ENCODE measurements at regions of chr1 and their contacts with region 1.

Region 1: DNA sequence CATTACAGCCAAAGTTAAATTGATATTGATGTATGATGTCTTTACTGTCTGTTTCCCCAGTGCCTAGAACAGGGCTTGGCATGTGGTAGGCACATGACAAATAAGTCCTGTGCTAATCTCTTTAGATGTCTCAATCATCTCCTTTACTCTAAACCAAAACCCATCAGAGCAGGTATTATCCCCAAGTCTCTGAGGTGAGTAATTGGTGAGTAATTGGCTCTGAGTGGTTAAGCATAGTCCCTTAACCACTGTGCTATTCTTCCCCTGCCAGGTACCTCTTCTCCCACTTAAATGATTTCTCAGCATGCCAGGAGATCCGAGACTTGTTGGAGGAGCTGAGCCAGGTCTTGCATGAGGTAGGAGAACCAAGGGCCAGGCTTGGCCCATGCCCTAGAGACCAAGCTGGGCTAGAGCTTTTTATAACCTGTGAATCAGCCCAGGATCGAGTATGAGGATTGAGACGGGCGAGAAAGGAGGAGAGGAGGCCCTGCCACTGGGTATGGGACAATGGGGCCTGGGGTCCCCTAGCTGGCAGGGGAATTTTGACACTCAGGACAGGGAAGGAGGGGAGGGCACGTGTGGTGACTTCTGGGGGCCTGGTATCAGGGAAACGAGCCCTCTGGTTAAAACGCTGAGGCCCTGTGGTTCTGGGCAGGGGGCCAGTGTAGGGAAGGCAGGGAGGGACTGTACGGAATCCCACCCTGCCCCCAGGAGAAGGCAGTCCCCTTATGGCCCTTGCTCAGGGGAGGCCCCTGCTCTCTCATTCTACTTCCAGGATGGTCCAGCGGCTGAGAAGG is 4.5 kb downstream of the CNKSR1 start:
- DNase-seq: peak; percentile 85 to 95
- ATAC-seq: peak; percentile 94 to 96
- H3K4me3 ChIP-seq: peak overlapping the region; percentile 38 to 52 (median 45)
- H3K27ac ChIP-seq: peak overlapping the region; percentile 94 to 98 (median 96)
- H3K4me1 ChIP-seq: peaks cover 26 to 35% of the 10 kb centered on the region in 2 donors
- H3K27me3 ChIP-seq: no peaks in the 10 kb centered on the region
- CTCF ChIP-seq: no peak
- POLR2A ChIP-seq: peak; percentile 40 to 55

Region 2: GRCh38 chr1:26254404-26254803 is 72.6 kb after region 1 on chr1:
- in situ Hi-C with region 1: no loop called
- intact Hi-C with region 1: loop called (anchors 2 kb)
- DNase-seq: peak; percentile 32 to 33
- ATAC-seq: peak; percentile 73 to 83
- H3K4me3 ChIP-seq: peak overlapping the region; percentile 36 to 60 (median 43)
- H3K27ac ChIP-seq: peak overlapping the region; percentile 89 to 96 (median 94)
- H3K4me1 ChIP-seq: peaks cover 39 to 50% of the 10 kb centered on the region in 2 donors
- H3K27me3 ChIP-seq: no peaks in the 10 kb centered on the region
- CTCF ChIP-seq: no peak
- POLR2A ChIP-seq: peak; percentile 36 to 76

Region 3: DNA sequence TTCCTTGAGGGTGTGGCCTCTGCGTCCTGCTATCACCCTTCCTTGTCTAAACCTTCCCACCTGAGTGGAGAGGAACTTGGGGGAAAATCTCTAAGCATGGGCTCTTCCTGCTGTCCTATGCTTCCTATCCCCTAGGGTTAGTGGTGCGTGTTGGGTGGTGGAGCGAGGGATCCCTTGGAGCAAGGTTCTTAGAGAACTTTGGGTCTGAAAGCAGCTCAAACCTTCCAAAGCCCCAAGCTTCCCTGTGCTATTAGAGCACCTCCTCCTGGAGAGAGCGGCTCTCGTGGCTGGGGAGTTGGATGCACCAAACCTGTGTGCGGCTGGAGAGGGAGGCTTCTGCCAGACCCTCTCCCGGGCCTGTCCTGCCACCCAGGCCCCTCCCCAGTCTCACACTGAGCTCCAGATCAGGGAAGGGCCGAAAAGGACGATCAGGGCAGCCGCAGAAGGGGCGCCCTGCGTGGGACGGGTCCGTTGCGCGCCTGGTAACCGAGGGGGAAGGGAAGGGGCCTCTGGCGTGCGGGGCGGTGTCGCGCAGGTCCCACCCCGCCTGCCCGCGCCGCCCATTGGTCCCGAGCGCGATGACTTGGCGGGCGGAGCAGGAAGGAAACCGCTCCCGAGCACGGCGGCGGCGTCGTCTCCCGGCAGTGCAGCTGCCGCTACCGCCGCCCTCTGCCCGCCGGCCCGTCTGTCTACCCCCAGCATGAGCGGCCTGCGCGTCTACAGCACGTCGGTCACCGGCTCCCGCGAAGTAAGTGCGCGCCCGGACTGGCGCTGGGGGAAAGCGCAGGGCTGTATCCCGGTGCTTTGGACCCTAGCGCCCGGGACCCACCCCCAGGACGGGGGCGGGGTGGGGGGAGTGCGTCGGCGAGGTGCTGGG is 97.9 kb after region 1 on chr1 and contains the start of gene SH3BGRL3:
- in situ Hi-C with region 1: no loop called
- intact Hi-C with region 1: loop called (anchors 5 kb)
- DNase-seq: peak; percentile 78 to 82
- ATAC-seq: peak; percentile 27 to 40
- H3K4me3 ChIP-seq: peak within 1 kb of the TSS; percentile 75 to 84 (median 78)
- H3K27ac ChIP-seq: peak within 1 kb of the TSS; percentile 89 to 98 (median 93)
- H3K4me1 ChIP-seq: peaks cover 54 to 67% of the 10 kb centered on the region in 2 donors
- H3K27me3 ChIP-seq: no peaks in the 10 kb centered on the region
- CTCF ChIP-seq: peak in 3 of 5 experiments; percentile 8 to 27 (median 20)
- POLR2A ChIP-seq: peak; percentile 84 to 90
- total RNA-seq, gene SH3BGRL3: 10.3 to 16.9 (median 13.1) TPM

Region 4: GRCh38 chr1:26833432-26834405 is 651.9 kb after region 1 on chr1:
- in situ Hi-C with region 1: no loop called
- intact Hi-C with region 1: no loop called
- DNase-seq: peak in 1 of 2 donors; percentile 31
- ATAC-seq: no peak
- H3K4me3 ChIP-seq: no peak overlapping the region
- H3K27ac ChIP-seq: no peak overlapping the region
- H3K4me1 ChIP-seq: peaks cover 8% of the 10 kb centered on the region in 2 donors
- H3K27me3 ChIP-seq: no peaks in the 10 kb centered on the region
- CTCF ChIP-seq: no peak
- POLR2A ChIP-seq: no peak

Measured in gastrocnemius medialis (tissue), 4 donors.